ENCODE measurements at regions of chr19 and their contacts with region 1.

Region 1: GRCh38 chr19:48999481-49000325 is 6.0 kb downstream of the RUVBL2 start:
- DNase-seq: peak; percentile 54
- CTCF ChIP-seq: peak; percentile 81

Region 2: GRCh38 chr19:48975947-48976847 is 23.5 kb before region 1 on chr19:
- CTCF ChIA-PET with region 1: interaction called, 10 read pairs
- POLR2A ChIA-PET with region 1: no interaction called
- DNase-seq: no peak
- CTCF ChIP-seq: no peak

Region 3: DNA sequence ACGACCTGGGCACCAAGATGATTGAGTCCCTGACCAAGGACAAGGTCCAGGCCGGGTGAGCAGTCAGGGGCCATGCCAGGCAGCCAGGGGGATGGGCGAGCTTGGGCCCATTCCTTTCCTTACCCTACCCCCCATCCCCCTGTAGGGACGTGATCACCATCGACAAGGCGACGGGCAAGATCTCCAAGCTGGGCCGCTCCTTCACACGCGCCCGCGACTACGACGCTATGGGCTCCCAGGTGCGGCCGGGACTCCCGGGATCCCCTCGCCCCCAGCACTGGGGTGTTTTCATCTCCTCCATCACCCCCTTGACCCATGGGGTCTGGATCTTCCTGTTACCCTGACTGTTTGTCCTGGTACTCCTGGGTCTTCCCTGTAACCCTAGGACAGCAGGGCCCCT is 10.1 kb after region 1 on chr19:
- CTCF ChIA-PET with region 1: interaction called, 45 read pairs
- POLR2A ChIA-PET with region 1: interaction called, 3 read pairs
- DNase-seq: no peak
- CTCF ChIP-seq: no peak

Region 4: GRCh38 chr19:49106648-49107135 is 107.0 kb after region 1 on chr19:
- CTCF ChIA-PET with region 1: interaction called, 10 read pairs
- POLR2A ChIA-PET with region 1: no interaction called
- DNase-seq: no peak
- CTCF ChIP-seq: peak; percentile 77

Region 5: DNA sequence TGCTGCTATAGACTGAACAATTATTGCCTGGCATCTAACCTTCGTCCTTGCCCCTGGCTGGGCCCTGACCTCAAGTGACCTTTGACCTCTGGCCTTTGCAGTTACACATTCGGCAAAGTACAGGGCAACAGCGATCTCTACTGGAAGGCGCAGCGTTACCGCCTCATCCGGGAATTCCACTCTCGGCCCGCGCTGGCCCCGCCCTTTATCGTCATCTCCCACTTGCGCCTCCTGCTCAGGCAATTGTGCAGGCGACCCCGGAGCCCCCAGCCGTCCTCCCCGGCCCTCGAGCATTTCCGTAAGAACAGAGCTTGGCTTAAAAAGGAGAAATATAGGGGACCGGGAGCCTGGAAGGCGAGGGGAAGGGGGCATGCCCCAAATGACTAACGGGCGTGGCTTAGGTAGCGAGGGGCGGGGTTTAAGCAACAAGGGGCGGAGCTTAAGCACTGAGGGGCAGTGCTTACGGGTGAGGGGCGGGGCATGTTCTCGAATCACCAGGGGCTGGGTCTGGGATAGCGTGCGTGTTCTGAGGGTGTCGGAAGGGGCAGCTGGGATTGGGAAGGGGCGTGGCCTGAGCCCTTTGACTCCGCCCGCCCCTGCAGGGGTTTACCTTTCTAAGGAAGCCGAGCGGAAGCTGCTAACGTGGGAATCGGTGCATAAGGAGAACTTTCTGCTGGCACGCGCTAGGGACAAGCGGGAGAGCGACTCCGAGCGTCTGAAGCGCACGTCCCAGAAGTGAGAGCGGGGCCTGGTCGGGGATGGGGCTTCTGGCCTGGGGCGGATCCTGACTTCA is 210.6 kb after region 1 on chr19:
- CTCF ChIA-PET with region 1: interaction called, 10 read pairs
- POLR2A ChIA-PET with region 1: no interaction called
- DNase-seq: no peak
- CTCF ChIP-seq: no peak